ENCODE measurements at regions of chr16 and their contacts with region 1.

Region 1: DNA sequence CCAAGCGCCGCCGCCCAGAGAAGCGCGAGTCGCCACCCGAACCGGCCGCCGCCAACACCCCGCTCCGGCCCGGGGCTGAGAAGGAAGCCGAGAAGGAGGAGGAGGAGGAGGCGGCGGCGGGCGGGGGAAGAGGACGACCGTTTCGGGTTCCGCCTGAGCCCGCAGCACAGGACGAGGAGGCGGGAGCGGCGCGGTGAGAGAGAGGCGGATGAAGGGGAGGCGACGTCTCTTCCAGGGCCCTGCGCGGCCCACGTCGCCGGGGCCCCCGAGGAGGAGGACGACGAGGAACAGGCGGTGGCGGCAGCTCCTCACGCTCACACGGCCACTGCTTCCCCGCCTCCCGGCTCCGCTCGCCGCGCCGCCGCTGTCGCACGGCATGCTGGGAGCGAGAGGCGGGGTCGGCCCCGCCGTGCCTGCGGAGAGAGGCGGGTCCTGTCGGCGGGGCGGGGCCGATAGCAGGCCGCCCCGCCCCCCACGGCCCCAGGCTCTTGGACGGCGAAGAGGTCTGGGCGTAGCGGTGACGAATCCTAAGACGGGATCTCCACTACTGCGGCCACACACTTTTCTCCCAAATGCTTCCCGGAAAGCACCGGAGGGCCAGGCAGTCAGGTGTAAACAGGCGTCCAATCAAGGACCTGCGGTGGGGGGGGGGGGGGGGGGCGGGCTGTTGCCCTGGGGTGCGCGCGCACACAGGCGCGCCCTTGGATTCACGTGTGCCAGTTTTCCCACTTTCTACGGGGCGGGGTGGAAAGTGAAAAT is 97.3 kb upstream of the METTL9 start:
- DNase-seq: peak; percentile 91 to 95 (median 93)
- ATAC-seq: peak; percentile 97
- H3K4me3 ChIP-seq: peak overlapping the region; percentile 88
- H3K27ac ChIP-seq: peak overlapping the region; percentile 96
- H3K4me1 ChIP-seq: peaks cover 0 to 17% of the 10 kb centered on the region in 2 experiments; a peak in 3 of 5 replicates
- H3K27me3 ChIP-seq: no peaks in the 10 kb centered on the region
- CTCF ChIP-seq: peak in 1 of 3 experiments; percentile 26; a peak in 2 of 6 replicates
- EP300 ChIP-seq: no peak
- POLR2A ChIP-seq: peak; percentile 74
- RAD21 ChIP-seq: peak in 1 of 2 experiments; percentile 28; a peak in 1 of 4 replicates

Region 2: DNA sequence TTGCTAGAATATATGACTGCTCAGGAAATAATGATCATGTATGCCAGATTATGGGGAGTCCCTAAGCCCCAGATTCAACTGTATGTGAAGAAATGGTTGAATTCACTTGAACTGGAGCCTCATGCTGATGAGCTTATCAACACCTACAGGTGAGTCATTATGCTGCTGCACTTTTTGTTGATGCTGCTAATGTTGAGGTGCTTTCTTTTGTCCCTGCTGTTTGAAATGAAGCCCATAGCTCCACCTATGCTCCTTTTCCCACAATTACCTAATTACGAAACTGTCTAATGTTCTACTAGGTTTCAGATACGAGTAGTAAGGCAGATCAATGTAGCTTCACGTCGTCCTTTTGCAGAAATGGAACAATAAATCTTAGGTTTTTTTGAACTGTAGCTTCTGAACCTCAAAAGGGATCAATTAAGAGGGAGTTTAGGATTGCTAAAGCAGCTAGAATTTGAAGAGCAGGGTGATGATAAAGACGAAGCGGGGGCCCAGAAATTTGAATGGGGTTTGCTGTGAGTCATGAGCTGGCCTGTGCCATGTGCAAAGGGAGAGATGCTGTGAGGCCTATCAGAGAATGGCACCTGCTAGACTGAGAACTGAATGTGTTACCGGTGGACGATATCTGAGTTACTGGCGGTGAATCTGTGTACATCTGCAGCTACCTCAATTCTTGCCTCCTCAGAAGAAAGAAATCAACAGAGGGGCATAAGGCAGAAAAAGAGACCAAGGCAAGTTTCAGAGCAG is 445.0 kb after region 1 on chr16:
- CTCF ChIA-PET with region 1: no interaction called
- POLR2A ChIA-PET with region 1: no interaction called
- in situ Hi-C with region 1: loop called (anchors 25 kb)
- intact Hi-C with region 1: no loop called
- DNase-seq: peak in 2 of 4 experiments; percentile 8 to 13
- ATAC-seq: no peak
- H3K4me3 ChIP-seq: no peak overlapping the region
- H3K27ac ChIP-seq: no peak overlapping the region
- H3K4me1 ChIP-seq: peaks cover 0 to 4% of the 10 kb centered on the region in 2 experiments; a peak in 2 of 5 replicates
- H3K27me3 ChIP-seq: peaks cover 8 to 20% of the 10 kb centered on the region in 2 experiments
- CTCF ChIP-seq: no peak
- EP300 ChIP-seq: no peak
- POLR2A ChIP-seq: no peak
- RAD21 ChIP-seq: no peak

Measured in K562 (cell line).